Caco-2 (cell line): ENCODE measurements at regions of chr11 and their contacts with region 1.

Region 1: DNA sequence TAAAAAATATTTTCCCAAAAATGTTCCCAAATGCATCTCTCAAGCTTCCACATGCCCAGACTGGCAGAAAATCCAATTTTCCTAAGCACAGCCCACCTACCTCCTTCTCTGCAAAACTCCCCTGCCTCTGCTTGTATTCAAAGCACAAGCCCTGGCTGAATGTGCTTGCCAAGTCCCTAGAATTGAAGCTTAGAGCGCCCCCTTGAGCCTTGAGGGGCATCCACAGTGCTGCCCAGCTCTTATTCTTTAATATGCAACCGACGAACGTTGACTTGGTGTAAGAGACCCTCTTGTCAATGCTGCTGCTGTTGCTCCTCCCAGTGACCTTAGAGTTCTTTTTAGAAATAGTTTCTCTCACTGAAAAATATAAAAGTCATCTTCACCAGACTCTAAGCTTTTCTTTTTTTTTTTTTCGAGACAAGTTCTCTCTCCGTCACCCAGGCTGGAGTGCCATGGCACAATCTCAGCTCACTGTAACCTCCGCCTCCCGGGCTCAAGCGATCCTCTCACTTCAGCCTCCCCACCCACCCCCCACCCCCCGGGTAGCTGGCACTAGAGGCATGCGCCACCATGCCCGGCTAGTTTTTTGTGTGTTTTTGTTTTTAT is 63.5 kb upstream of the CAPRIN1 start:
- DNase-seq: peak; percentile 71 to 77
- H3K4me3 ChIP-seq: no peak overlapping the region
- H3K4me3 Mint-ChIP-seq: no peak overlapping the region
- H3K27ac Mint-ChIP-seq: no peak overlapping the region
- H3K4me1 ChIP-seq: no peaks in the 10 kb centered on the region
- H3K4me1 Mint-ChIP-seq: no peaks in the 10 kb centered on the region
- H3K27me3 ChIP-seq: no peaks in the 10 kb centered on the region
- H3K27me3 Mint-ChIP-seq: no peaks in the 10 kb centered on the region
- CTCF ChIP-seq: peak; percentile 71 to 77

Region 2: GRCh38 chr11:33857933-33858371 is 130.1 kb before region 1 on chr11:
- CTCF ChIA-PET with region 1: interaction called, 3 read pairs
- POLR2A ChIA-PET with region 1: no interaction called
- intact Hi-C with region 1: loop called (anchors 1 kb)
- DNase-seq: peak; percentile 60 to 77
- H3K4me3 ChIP-seq: no peak overlapping the region
- H3K4me3 Mint-ChIP-seq: no peak overlapping the region
- H3K27ac Mint-ChIP-seq: no peak overlapping the region
- H3K4me1 ChIP-seq: no peaks in the 10 kb centered on the region
- H3K4me1 Mint-ChIP-seq: no peaks in the 10 kb centered on the region
- H3K27me3 ChIP-seq: peaks cover 4% of the 10 kb centered on the region; the same call in 1 of the 2 replicates
- H3K27me3 Mint-ChIP-seq: peaks cover 39% of the 10 kb centered on the region
- CTCF ChIP-seq: peak; percentile 88 to 91